Naive thymus-derived CD4-positive, alpha-beta T cell (primary cell): ENCODE measurements at regions of chr2 and their contacts with region 1.

Region 1: DNA sequence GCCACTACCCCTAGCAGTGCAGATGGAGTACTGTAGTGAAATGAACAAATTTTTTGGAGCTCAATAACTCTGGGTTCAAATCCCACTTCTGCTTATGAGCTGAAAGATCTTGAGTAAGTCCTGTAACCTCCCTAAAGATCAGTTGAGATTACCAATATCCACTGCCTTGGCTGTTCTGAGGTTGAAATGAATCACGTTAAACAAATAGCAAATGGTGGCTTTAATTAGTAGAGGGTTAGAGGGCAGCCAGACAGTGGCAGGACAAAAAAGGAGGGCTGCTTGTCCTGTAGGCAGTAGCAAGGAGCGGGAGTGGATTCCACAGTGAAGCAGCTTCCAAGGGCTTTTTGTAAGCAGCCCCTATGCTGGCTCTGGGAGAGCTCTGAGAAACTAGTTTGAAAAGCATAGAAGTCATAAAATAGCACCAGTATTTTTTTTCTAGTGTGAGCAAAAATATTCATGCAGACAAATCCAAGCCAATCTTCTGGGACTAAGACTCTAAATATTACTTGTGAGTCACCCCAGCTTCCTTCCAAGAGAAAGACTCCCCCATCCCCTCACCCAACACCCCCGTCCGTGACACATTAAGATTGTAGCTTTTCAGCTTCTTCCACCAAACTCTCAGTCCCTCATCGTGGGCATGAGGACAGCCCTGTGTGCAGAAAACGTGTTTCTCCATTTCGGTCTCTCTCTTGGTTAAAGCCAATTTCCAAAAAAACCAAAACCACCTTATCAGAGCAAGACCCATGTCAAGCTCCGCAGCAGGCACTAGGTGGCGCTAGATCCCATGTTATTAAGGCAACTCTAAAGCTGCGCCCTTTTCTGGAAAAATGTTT is 123.5 kb upstream of the LGALSL start:
- DNase-seq: peak; percentile 61 to 80 (median 73)
- ATAC-seq: peak; percentile 54
- H3K4me3 ChIP-seq: no peak overlapping the region
- H3K4me3 Mint-ChIP-seq: peak overlapping the region in 9 of 10 donors; percentile 53 to 86 (median 68)
- H3K27ac ChIP-seq: no peak overlapping the region
- H3K27ac Mint-ChIP-seq: peak overlapping the region in 8 of 9 donors; percentile 9 to 94 (median 84)
- H3K4me1 ChIP-seq: peaks cover 27 to 29% of the 10 kb centered on the region in 2 donors
- H3K4me1 Mint-ChIP-seq: peaks cover 17 to 52% (median 36%) of the 10 kb centered on the region in 7 donors
- H3K27me3 ChIP-seq: no peaks in the 10 kb centered on the region
- H3K27me3 Mint-ChIP-seq: peaks cover 0 to 3% (median 0%) of the 10 kb centered on the region in 5 donors

Region 2: DNA sequence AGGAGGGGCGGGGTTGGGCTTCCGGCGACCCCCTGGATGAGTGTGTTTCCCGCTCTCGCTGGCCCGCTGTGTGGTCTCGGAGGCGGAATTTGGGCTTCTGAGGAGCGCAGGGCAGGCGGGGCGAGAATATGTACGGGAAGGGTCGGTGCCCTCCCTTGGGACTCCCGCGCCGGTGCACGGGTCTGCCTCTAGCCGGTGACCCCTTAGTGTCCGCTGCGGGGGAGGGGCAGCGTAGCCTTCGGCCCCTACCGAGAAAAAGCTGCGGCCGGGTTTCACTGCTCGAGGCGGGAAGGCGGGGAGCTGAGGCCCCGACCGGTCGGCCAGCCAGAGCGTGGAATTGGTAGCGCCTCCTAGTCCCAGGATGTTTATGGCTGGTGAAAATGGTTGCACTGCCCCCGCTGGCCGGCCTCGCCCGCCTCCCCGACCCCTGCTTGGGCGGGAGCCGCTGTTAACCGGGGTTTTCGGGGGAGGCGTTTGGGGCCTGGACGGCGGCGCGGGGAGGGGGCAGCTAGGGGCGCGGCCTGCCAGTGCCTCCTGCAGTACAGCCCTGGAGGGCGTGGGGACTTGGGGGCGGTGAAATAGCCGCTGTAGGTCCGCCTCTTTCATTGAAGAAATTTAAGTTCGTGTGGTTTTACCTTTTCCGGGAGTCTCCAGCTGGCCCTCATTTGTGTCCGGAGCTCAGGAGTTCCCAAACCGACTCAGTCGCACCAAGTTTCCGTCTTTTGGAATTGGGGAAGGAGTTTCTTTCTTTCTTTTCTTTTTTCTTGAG is 489.1 kb before region 1 on chr2 and contains the start of gene UGP2:
- CTCF ChIA-PET with region 1: no interaction called
- POLR2A ChIA-PET with region 1: no interaction called
- intact Hi-C with region 1: loop called in 1 of 2 experiments (anchors 5 kb)
- DNase-seq: peak; percentile 68 to 89 (median 83)
- ATAC-seq: peak; percentile 77
- H3K4me3 ChIP-seq: peak within 1 kb of the TSS; percentile 82
- H3K4me3 Mint-ChIP-seq: peak within 1 kb of the TSS; percentile 97 to 100 (median 99)
- H3K27ac ChIP-seq: peak within 1 kb of the TSS; percentile 90
- H3K27ac Mint-ChIP-seq: peak within 1 kb of the TSS; percentile 95 to 99 (median 97)
- H3K4me1 ChIP-seq: peaks cover 5 to 24% of the 10 kb centered on the region in 2 donors
- H3K4me1 Mint-ChIP-seq: peaks cover 27 to 60% (median 53%) of the 10 kb centered on the region in 7 donors
- H3K27me3 ChIP-seq: no peaks in the 10 kb centered on the region
- H3K27me3 Mint-ChIP-seq: peaks cover 0 to 14% (median 0%) of the 10 kb centered on the region in 5 donors
- total RNA-seq, gene UGP2: 69.5 to 134 (median 92.4) TPM

Region 3: GRCh38 chr2:64144057-64145013 is 186.2 kb before region 1 on chr2 and contains the start of gene PELI1:
- CTCF ChIA-PET with region 1: interaction called, 15 read pairs
- POLR2A ChIA-PET with region 1: interaction called, 40 read pairs
- intact Hi-C with region 1: loop called (anchors 1 kb)
- DNase-seq: peak; percentile 82 to 95 (median 88)
- ATAC-seq: peak; percentile 97
- H3K4me3 ChIP-seq: peak within 1 kb of the TSS; percentile 88
- H3K4me3 Mint-ChIP-seq: peak within 1 kb of the TSS in 9 of 10 donors; percentile 87 to 98 (median 93)
- H3K27ac ChIP-seq: peak within 1 kb of the TSS; percentile 98
- H3K27ac Mint-ChIP-seq: peak within 1 kb of the TSS; percentile 93 to 99 (median 96)
- H3K4me1 ChIP-seq: peaks cover 11 to 24% of the 10 kb centered on the region in 2 donors
- H3K4me1 Mint-ChIP-seq: peaks cover 19 to 33% (median 31%) of the 10 kb centered on the region in 7 donors
- H3K27me3 ChIP-seq: no peaks in the 10 kb centered on the region
- H3K27me3 Mint-ChIP-seq: no peaks in the 10 kb centered on the region
- total RNA-seq, gene PELI1: 33.4 to 170 (median 57.2) TPM

Region 4: GRCh38 chr2:64283641-64284361 is 46.7 kb before region 1 on chr2:
- CTCF ChIA-PET with region 1: interaction called, 3 read pairs
- POLR2A ChIA-PET with region 1: interaction called, 7 read pairs
- intact Hi-C with region 1: loop called (anchors 5 kb)
- DNase-seq: peak in 7 of 9 donors; percentile 14 to 54 (median 41)
- ATAC-seq: peak; percentile 82
- H3K4me3 ChIP-seq: peak overlapping the region; percentile 41
- H3K4me3 Mint-ChIP-seq: no peak overlapping the region
- H3K27ac ChIP-seq: peak overlapping the region; percentile 59
- H3K27ac Mint-ChIP-seq: no peak overlapping the region
- H3K4me1 ChIP-seq: peaks cover 8 to 12% of the 10 kb centered on the region in 2 donors
- H3K4me1 Mint-ChIP-seq: no peaks in the 10 kb centered on the region
- H3K27me3 ChIP-seq: no peaks in the 10 kb centered on the region
- H3K27me3 Mint-ChIP-seq: no peaks in the 10 kb centered on the region

Region 5: DNA sequence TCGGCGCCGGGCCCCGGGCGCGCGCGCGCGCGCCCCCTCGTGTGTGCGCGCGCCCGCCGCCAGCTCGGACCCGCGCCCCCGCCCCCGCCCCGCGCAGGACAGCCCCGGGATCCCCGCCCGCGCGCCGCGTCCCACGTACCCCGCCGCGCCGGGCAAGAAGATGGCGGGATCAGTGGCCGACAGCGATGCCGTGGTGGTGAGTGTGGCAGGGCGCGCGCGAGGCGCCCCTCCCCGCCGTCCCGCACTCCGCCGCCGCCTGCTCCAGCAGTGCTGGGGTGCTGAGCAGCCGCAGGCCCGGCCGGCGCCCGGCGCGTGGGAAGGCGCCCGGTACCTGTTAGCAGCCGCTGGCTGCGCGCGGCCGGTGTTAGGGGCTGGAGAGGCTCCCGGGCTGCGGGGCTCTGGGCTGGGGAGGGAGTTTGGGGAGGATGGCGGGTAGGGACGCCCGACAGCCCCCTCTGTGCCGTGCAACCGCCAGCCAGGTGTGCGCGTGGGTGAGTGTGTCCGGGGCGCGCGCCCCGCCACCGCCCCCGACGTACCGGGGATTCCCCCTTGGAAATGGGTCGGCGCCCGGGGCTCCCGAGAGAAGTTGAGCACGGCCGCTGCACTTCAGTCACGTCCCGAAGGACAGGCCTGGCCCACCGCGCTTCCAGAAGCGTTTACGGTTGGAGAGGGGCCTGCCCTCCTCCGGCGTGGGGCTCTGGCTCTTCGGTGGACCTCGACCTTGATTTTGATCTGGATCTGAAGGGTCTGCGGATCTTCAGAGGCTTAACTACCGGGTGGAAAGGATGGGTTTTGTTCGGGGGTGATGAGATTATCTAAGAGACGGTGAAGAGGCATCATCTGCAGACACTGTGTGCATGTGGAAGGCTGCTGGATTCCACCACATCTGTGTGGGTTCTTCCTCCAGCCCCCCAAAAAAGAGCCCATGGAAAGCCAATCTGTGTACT is 124.2 kb after region 1 on chr2:
- CTCF ChIA-PET with region 1: no interaction called
- POLR2A ChIA-PET with region 1: no interaction called
- intact Hi-C with region 1: no loop called
- DNase-seq: peak; percentile 14 to 68 (median 43)
- ATAC-seq: peak; percentile 82
- H3K4me3 ChIP-seq: peak overlapping the region; percentile 44
- H3K4me3 Mint-ChIP-seq: peak overlapping the region; percentile 75 to 91 (median 86)
- H3K27ac ChIP-seq: no peak overlapping the region
- H3K27ac Mint-ChIP-seq: peak overlapping the region in 7 of 9 donors; percentile 34 to 84 (median 62)
- H3K4me1 ChIP-seq: peaks cover 0 to 4% of the 10 kb centered on the region in 2 donors
- H3K4me1 Mint-ChIP-seq: peaks cover 0 to 16% (median 11%) of the 10 kb centered on the region in 7 donors
- H3K27me3 ChIP-seq: peaks cover 0 to 2% of the 10 kb centered on the region in 2 donors
- H3K27me3 Mint-ChIP-seq: peaks cover 0 to 50% (median 8%) of the 10 kb centered on the region in 5 donors

Region 6: DNA sequence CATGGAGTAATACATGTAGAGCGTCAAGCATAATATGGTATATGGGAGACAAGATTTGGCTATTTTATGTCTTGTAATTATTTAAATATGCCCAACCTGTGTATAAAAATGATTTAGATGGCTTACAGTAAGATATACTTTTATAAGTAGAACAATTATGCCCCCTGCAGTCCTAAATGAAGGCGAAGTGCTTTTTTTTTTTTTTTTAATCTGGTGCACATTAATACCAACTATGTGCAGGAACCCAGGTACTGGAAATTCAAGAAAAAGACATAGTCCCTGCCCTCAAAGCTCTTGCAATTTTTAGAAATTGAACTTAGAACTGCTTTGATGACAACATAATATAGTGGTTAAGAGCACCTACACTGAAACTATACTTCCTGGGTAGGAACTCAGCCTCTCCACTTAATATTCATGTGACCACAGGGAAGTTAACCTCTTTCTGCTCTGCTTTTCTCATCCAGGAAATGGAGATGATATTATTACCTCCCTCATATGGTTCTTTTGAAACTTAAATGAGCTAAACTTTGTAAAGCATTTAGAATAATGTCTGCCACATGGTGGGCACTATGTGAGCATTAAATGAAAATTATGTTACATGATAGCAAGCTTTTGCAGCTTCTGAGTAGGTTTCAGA is 231.8 kb after region 1 on chr2:
- CTCF ChIA-PET with region 1: interaction called, 45 read pairs
- POLR2A ChIA-PET with region 1: no interaction called
- intact Hi-C with region 1: loop called (anchors 1 kb)
- DNase-seq: peak in 7 of 9 donors; percentile 10 to 63 (median 44)
- ATAC-seq: peak; percentile 79
- H3K4me3 ChIP-seq: no peak overlapping the region
- H3K4me3 Mint-ChIP-seq: no peak overlapping the region
- H3K27ac ChIP-seq: no peak overlapping the region
- H3K27ac Mint-ChIP-seq: peak overlapping the region in 1 of 9 donors; percentile 1
- H3K4me1 ChIP-seq: peaks cover 0 to 4% of the 10 kb centered on the region in 2 donors
- H3K4me1 Mint-ChIP-seq: peaks cover 26 to 49% (median 38%) of the 10 kb centered on the region in 7 donors
- H3K27me3 ChIP-seq: no peaks in the 10 kb centered on the region
- H3K27me3 Mint-ChIP-seq: no peaks in the 10 kb centered on the region

Region 7: DNA sequence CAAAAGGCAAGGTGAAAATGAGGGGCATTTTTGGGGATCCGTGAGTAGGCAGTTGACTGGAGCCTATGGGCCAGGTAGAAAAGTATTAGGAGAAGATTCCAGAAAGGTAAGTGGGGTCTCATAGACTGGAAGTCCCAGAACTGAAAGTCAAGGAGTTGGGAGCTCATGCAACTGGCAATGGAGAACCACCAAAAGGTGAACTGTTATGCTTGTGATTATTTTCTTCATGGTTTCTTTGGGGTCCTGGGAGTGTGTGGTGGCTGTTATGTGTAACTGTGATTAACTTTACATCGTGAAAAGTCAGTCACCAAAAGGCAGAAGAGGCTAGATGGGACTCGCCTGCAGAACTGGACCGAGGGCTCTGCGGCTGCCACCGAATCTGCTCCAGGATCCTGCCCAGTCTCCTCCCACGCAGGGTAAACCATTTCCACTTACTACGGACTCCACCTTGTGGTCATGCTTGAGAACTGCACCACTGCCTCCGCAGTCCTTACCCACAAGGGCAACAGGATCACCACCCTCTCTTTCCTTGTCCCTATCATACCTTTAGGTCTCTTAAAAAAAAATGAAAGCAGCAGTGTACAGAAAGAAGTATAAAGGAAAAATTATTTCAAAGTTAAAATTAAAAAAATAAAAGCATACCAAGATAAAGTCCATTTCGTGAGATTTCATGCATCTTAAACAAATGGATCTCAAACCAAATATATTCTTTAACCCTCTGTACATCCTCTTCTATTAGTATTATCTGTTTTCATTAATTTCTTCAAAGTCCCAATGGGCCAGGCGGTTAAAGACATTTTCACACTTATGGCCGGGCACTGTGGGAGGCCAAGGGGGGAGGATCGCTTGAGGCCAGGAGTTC is 710.1 kb after region 1 on chr2:
- CTCF ChIA-PET with region 1: interaction called, 3 read pairs
- POLR2A ChIA-PET with region 1: no interaction called
- intact Hi-C with region 1: loop called in 1 of 2 experiments (anchors 5 kb)
- DNase-seq: peak; percentile 43 to 77 (median 68)
- ATAC-seq: peak; percentile 100
- H3K4me3 ChIP-seq: no peak overlapping the region
- H3K4me3 Mint-ChIP-seq: peak overlapping the region in 6 of 10 donors; percentile 23 to 65 (median 44)
- H3K27ac ChIP-seq: no peak overlapping the region
- H3K27ac Mint-ChIP-seq: peak overlapping the region in 1 of 9 donors; percentile 34
- H3K4me1 ChIP-seq: peaks cover 0 to 3% of the 10 kb centered on the region in 2 donors
- H3K4me1 Mint-ChIP-seq: peaks cover 0 to 24% (median 12%) of the 10 kb centered on the region in 7 donors
- H3K27me3 ChIP-seq: no peaks in the 10 kb centered on the region
- H3K27me3 Mint-ChIP-seq: peaks cover 0 to 2% (median 0%) of the 10 kb centered on the region in 5 donors